ENCODE measurements at regions of chr14 and their contacts with region 1.

Region 1: GRCh38 chr14:77151918-77152588 is 10.5 kb upstream of the ZDHHC22 start:
- DNase-seq: peak in 3 of 42 donors; percentile 15 to 34 (median 20)

Region 2: GRCh38 chr14:77212943-77213678 is 61.1 kb after region 1 on chr14:
- intact Hi-C with region 1: loop called (anchors 10 kb)
- DNase-seq: peak in 41 of 42 donors; percentile 29 to 83 (median 60)

Region 3: DNA sequence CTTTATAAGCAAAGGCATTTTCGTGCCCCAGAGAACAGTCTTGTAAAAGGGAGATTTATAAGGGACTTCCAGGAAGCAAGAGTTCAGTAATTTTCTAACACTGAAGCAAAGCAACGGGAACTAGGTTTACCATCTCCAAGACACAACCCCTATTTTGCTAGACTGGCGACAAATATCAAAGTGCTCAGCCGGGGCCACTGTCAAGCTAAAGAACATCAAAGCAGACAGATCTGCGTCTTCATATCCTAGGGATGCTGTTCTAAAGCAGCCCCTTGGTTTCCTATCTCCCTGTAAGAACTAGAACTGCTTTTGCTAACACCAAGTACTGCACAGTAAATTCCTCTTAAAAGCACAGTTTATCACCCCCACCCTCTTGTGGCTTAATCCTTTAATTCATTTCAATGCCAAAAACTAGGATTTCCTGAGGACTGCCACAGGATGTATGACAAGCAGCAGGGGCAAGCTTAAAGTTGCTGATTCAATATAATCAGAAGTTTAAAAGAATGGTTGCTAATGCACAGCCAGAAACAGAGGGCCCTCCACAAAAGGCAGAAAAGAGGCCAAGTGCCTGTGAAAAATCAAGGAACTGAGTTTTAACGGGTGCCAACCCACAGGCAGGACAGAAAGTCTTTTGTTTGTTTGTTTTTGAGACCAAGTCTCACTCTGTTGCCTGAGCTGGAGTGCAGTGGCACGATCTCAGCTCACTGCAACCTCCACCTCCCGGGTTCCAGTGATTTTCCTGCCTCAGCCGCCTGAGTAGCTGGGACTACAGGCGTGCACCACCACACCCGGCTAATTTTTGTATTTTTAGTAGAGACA is 390.6 kb after region 1 on chr14:
- intact Hi-C with region 1: loop called (anchors 10 kb)
- DNase-seq: peak in 15 of 42 donors; percentile 10 to 51 (median 28)

Region 4: GRCh38 chr14:77638771-77639171 is 486.7 kb after region 1 on chr14:
- intact Hi-C with region 1: no loop called
- DNase-seq: no peak